Esophagus squamous epithelium (tissue), 5 donors: ENCODE measurements at regions of chr20 and their contacts with region 1.

Region 1: GRCh38 chr20:43749734-43750294 is 23.0 kb upstream of the GTSF1L start:
- DNase-seq: no peak
- H3K4me3 ChIP-seq: no peak overlapping the region
- H3K27ac ChIP-seq: peak overlapping the region; percentile 11 to 89 (median 72)
- H3K4me1 ChIP-seq: peaks cover 6 to 16% (median 12%) of the 10 kb centered on the region in 3 donors
- H3K27me3 ChIP-seq: peaks cover 0 to 55% (median 0%) of the 10 kb centered on the region in 4 donors
- CTCF ChIP-seq: peak; percentile 98 to 100 (median 99)
- POLR2A ChIP-seq: no peak

Region 2: DNA sequence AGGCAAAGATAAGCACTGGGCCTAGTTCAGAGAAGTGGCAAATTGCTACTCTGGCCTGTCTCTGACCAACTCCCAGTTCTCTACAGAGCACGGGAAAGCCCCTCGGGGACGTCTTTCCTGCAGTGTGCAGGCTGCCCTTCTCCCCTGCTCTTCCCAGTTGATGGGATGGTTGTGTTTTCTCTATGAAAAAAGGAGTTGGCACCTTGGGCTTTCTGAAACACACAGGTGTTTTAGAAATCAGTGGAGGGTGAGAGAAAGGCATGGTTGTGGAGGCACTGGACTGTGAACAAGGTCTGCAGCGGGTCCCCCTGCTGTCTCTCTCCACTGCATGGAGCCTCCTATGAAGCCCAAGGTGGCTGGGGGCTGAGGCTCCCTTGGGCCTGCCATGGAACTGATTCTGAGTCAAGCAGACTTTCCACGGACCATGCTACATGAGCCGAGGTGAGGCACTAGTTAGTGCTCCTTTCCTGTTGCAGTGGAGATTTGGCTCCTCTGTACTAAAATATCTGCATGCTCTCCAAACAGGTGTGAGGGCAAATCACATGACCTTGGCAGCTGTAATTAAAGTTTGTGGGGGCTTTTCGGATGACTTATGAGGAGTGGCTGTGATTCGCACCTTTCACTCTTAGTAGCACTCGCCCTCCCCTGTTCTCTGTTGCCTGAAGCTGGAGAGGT is 39.3 kb before region 1 on chr20:
- intact Hi-C with region 1: no loop called
- DNase-seq: no peak
- H3K4me3 ChIP-seq: no peak overlapping the region
- H3K27ac ChIP-seq: no peak overlapping the region
- H3K4me1 ChIP-seq: no peaks in the 10 kb centered on the region
- H3K27me3 ChIP-seq: no peaks in the 10 kb centered on the region
- CTCF ChIP-seq: no peak
- POLR2A ChIP-seq: no peak

Region 3: DNA sequence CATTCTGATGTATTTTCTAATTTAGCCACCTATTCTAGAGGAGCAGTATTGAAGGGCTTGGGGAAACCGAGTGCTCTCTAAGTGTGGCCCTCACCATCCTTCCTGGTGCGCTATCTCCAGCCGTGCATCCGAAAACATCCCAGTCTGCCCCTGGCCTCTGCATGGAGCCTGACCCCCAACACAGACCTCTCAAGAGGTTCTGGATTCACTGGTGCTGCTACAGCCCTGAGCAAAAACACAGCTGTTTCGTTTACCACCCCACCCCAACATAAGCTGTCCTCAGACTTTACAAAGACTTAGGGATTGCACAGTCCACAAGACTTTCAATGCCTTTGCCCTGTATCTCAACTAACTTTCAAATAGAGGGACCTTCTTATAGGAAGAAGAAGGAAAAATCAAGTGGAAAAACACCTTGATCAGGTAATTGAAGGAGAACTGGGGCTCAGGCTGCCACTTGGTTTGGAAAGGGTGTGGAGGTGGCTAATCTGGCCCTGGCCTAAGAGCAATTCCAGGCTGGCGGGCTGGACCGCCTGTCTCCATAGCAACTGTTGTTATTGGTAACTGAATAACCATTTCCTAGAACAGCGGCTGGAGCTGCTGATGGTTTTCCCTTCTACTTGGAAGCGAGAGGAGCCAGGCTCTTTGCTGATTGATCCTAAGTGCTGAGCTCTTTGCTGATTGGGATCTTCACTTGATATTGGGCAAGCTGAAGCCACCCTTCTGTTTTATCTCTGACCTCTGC is 74.7 kb after region 1 on chr20:
- intact Hi-C with region 1: no loop called
- DNase-seq: no peak
- H3K4me3 ChIP-seq: no peak overlapping the region
- H3K27ac ChIP-seq: no peak overlapping the region
- H3K4me1 ChIP-seq: no peaks in the 10 kb centered on the region
- H3K27me3 ChIP-seq: peaks cover 0 to 33% (median 0%) of the 10 kb centered on the region in 4 donors
- CTCF ChIP-seq: no peak
- POLR2A ChIP-seq: no peak

Region 4: DNA sequence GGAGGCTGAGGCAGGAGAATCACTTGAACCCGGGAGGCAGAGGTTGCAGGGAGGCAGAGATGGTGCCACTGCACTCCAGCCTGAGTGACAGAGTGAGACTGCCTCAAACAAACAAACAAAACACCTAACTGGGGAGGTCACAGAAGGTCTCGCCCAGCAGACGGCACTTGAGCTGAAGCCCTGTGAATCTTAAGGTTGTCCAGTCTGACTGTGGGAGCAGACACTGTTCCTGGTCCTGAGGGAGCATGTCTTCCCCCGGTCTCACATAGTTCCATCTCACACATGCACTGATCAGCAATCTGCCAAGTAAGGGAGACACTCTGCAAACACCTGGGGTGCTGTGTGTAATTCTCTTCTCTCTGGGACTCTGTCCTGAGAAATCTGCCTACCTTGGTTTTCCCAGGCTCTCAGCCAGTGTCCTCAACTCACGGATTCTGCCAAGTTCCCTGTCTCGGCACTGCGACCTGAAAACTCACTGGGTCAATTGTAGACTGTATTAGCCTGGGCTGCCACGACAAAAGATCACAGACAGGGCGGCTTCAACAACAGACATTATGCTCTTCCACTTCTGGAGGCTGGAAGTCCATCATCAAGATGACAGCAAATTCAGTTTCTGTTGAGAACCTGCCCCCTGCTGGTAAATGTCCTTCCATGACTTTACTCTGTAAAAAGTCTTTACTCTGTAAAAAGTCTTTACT is 342.9 kb after region 1 on chr20:
- intact Hi-C with region 1: no loop called
- DNase-seq: no peak
- H3K4me3 ChIP-seq: no peak overlapping the region
- H3K27ac ChIP-seq: no peak overlapping the region
- H3K4me1 ChIP-seq: peaks cover 12 to 30% (median 17%) of the 10 kb centered on the region in 3 donors
- H3K27me3 ChIP-seq: peaks cover 0 to 3% (median 0%) of the 10 kb centered on the region in 4 donors
- CTCF ChIP-seq: peak in 5 of 6 experiments; percentile 22 to 60 (median 31)
- POLR2A ChIP-seq: no peak

Region 5: DNA sequence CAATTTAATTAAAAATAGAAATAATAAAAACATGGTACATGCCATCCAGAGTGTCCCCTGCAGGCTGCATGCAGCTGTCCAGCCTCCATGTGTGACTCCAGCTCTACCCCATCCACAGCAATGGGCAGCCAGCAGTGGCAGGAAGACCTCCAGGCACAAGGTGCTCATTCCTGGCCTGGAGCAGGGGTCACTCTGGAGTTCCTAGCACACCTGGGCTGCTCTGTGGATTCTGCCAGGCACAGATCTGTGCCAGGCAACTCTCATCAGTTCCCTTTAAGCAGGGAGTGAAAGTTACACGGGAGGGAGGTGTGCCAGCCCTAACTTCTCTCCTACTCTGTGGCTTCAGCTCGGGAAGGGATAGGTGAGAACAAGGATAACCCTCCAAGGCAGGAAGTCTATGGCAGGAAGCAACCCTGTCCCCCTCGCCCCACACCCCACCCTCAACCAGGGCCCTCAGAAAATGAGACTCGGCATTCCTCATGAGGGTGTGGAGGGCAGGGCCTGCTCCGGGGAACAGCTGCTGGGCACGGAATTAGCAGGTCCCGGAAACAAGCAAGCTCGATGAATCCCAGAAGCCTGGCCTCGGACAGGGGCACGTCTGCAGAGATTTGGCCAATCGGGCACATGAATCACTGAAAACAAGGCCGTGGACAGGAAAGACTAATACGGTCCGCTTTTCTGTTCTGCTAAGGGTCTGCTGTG is 427.2 kb after region 1 on chr20:
- intact Hi-C with region 1: loop called (anchors 10 kb)
- DNase-seq: no peak
- H3K4me3 ChIP-seq: peak overlapping the region in 1 of 4 donors; percentile 38
- H3K27ac ChIP-seq: peak overlapping the region; percentile 1 to 87 (median 66)
- H3K4me1 ChIP-seq: peaks cover 0 to 23% (median 15%) of the 10 kb centered on the region in 3 donors
- H3K27me3 ChIP-seq: peaks cover 0 to 38% (median 0%) of the 10 kb centered on the region in 4 donors
- CTCF ChIP-seq: no peak
- POLR2A ChIP-seq: no peak